Uterus (tissue), 4 donors: ENCODE measurements at regions of chr11 and their contacts with region 1.

Region 1: GRCh38 chr11:69918938-69919650 is 99.9 kb upstream of the FGF3 start:
- DNase-seq: peak; percentile 84 to 85
- H3K4me3 ChIP-seq: no peak overlapping the region
- H3K27ac ChIP-seq: peak overlapping the region; percentile 0 to 48
- H3K4me1 ChIP-seq: peaks cover 0 to 16% of the 10 kb centered on the region in 2 donors
- H3K27me3 ChIP-seq: no peaks in the 10 kb centered on the region
- CTCF ChIP-seq: peak; percentile 91 to 98 (median 96)
- POLR2A ChIP-seq: no peak

Region 2: DNA sequence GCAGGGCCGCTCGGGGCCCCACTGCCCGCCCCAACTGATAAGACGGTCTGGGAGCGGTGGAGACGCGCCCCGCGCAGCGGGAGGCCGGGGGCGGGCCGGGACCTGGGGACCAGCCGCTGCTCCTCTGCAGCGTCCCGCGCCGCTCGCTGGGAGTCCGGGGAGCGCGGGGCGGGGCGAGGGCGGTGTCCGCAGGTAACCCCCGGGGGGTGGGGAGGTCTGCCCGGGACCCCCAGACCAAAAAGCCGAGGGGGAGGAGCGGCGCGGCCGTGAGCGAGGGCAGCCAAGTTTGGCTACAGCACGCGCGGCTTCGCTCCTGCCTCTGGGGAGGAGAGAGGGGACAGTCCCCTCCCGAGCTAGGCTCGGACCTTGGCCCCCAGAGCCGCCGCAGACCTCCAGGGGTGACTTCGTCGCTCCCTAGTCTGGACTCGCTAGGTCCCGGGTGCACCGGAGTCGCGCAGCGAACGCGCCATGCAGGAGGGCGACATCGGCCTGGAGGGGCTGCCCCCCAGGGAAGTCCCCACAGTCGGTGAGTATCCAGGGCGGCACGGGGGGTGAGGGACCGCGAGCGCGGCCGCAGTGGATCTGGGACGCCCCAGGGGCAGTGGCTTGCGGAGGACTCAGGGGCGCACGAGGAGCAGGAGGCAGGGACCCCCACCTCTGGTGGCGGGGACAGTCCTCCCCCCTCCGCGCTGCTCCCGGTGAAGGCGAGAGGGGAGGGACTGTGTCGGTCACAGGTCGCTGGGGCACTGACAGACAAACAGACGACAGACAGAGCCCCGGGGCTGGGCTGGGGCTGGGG is 66.7 kb after region 1 on chr11:
- intact Hi-C with region 1: no loop called
- DNase-seq: no peak
- H3K4me3 ChIP-seq: peak overlapping the region; percentile 36 to 37
- H3K27ac ChIP-seq: peak overlapping the region; percentile 42 to 51
- H3K4me1 ChIP-seq: no peaks in the 10 kb centered on the region
- H3K27me3 ChIP-seq: no peaks in the 10 kb centered on the region
- CTCF ChIP-seq: no peak
- POLR2A ChIP-seq: no peak

Region 3: DNA sequence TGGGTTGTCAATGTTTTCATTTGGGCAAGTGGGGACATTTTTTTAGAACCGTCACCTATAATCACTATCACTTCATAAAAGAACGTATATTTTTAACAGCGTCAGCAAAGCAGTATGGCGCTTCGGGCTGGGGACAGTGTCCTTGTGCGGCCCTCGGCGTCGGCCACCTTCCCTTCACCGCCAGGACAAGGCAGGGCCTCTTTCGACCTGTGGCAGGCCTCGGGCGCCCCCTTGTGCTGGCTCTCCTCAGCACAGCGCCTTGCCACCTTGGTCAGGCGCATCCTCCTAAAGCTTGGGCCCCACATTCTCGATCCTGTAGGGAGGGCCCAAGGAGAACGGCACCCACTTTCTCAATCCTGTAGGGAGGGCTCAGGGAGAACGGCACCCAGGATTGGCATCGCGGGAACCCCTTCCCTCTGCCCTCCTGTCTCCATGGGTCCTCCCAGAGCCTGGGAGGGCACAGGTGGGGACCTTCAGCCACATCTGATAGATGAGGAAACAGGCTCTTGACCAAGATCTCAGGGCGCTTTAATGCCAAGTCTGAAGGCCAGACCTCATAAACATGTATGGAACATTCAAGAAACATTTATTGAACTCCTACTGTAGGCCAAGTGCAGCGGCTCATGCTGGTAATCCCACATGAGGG is 272.5 kb after region 1 on chr11:
- intact Hi-C with region 1: loop called (anchors 5 kb)
- DNase-seq: peak; percentile 63 to 66
- H3K4me3 ChIP-seq: no peak overlapping the region
- H3K27ac ChIP-seq: no peak overlapping the region
- H3K4me1 ChIP-seq: no peaks in the 10 kb centered on the region
- H3K27me3 ChIP-seq: no peaks in the 10 kb centered on the region
- CTCF ChIP-seq: peak; percentile 89 to 94 (median 90)
- POLR2A ChIP-seq: no peak